AG04449 (cell line): ENCODE measurements at regions of chr17 and their contacts with region 1.

Region 1: DNA sequence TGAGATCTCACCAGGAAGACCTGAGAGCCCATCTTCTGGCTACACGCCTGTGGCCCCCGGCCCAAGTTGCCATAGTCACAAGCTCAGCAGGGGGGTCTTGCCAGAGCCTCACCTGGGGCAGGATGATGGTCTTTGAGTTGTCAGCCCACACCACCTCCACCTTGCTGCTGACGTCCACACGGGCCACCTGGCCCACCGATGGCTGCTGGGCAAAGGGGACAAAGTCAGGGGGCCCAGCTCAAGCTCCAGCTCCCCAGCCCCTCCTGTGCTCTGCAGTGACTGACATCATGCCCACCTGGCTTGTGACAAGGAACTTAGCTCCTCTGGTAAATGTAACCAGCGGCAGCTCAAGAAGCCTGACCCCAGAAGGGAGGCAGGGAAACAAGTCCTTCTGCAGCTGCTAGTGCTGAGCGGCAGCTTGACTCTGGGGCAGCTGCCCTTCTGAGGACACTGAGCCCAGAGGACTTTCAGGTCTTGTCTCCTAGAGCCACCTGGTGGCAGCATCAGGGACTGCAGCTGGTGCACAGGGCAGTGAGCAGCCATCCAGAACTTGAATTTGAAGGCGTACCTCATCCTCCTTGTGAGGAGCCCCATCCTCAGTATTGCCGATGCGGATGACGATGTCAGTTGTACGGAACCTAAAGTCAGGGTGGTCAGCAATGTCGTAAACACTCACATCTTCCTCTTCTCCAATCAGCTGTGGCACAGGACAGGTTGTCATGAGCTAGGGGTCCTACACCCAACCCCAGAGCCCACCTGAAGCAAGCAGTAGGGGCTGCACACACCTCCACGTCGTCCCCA is 13.5 kb downstream of the SPHK1 start:
- DNase-seq: no peak
- H3K4me3 ChIP-seq: no peak overlapping the region
- CTCF ChIP-seq: peak; percentile 93

Region 2: GRCh38 chr17:76278952-76279741 is 118.7 kb before region 1 on chr17:
- CTCF ChIA-PET with region 1: interaction called, 19 read pairs
- POLR2A ChIA-PET with region 1: no interaction called
- DNase-seq: peak; percentile 14
- H3K4me3 ChIP-seq: no peak overlapping the region
- CTCF ChIP-seq: peak; percentile 94

Region 3: GRCh38 chr17:76314392-76315227 is 83.3 kb before region 1 on chr17:
- CTCF ChIA-PET with region 1: interaction called, 851 read pairs
- POLR2A ChIA-PET with region 1: no interaction called
- DNase-seq: no peak
- H3K4me3 ChIP-seq: no peak overlapping the region
- CTCF ChIP-seq: no peak

Region 4: GRCh38 chr17:76337413-76337777 is 60.5 kb before region 1 on chr17:
- CTCF ChIA-PET with region 1: interaction called, 25 read pairs
- POLR2A ChIA-PET with region 1: interaction called, 3 read pairs
- DNase-seq: no peak
- H3K4me3 ChIP-seq: no peak overlapping the region
- CTCF ChIP-seq: no peak

Region 5: DNA sequence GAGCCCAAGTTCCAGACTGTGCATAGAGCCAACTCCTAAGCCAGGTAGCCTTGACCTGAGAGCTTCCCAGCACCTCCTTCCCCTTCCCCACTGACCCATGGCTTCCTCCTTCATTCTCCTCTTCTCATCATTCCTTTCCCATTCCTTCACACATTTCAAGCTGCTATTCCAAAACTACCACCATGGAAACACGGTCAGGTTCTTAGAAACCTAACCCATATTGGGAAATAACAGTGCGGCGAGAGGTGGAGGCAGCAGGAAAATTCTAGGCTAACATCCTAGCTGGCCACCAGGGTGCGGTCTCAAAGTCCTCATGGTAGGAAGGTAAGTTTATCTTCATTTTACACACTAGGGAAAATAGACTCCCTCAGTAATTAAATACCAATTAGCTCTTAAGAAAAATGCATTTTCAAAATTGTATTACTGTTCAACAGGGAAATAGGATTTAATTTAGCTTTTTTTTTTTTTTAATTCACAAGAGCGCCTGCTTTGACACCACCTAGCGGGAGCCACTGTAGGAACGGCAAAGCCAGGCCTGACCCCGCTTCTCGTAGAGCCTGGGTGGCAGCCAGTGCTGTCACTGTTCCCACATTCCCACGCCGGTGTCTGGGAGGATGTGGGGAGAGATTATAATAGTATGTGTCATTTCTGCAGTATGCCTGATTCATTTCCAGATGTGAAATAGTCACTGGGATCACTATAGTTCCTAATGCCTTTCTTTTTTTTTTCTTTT is 27.5 kb before region 1 on chr17:
- CTCF ChIA-PET with region 1: interaction called, 16 read pairs
- POLR2A ChIA-PET with region 1: no interaction called
- DNase-seq: peak; percentile 67
- H3K4me3 ChIP-seq: no peak overlapping the region
- CTCF ChIP-seq: peak; percentile 68

Region 6: GRCh38 chr17:76452660-76453430 is 55.0 kb after region 1 on chr17 and contains the start of gene UBE2O:
- CTCF ChIA-PET with region 1: interaction called, 36 read pairs
- POLR2A ChIA-PET with region 1: no interaction called
- DNase-seq: no peak
- H3K4me3 ChIP-seq: peak within 1 kb of the TSS; percentile 77
- CTCF ChIP-seq: peak; percentile 80

Region 7: DNA sequence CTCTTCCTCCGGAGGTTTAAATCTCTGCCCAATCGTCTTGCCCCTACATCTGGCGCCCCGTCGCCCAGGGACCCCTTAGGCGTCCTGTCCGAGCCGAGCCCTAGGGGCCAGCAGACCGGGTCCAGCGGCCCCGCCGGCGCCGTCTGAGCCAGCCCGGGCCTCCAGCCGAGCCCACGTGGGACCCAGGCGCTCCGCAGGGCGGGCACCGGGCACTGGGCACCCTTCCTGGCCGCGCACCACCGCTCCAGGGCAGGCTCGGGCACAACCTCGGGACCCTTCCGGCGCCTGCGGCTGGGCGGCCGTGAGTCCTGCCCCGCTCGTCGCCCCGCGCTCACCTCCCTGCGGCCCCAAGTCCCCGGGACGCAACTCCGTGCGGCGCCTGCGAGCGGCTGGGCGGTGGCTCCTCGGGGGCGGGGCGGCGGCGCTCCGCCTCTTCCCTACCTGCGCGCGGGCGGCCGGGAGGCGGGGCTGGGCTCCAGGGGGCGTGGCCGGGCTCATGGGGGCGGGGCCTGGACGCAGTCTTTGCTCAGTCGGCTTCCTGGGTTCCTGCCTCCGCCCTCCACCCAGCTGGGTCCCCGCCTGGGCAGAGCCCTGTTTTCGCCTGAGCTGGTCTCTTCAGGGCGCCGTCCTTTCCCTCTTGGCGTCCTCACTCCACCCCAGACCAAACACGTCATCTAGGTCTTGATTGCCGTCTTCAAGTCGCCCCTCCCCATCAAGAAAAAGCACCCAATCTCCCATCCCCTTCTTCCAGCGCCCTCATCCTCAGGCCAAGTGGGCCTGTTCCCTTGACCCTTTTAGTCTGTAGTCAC is 103.3 kb after region 1 on chr17 and contains the start of gene RHBDF2:
- CTCF ChIA-PET with region 1: interaction called, 15 read pairs
- POLR2A ChIA-PET with region 1: no interaction called
- DNase-seq: no peak
- H3K4me3 ChIP-seq: peak within 1 kb of the TSS; percentile 66
- CTCF ChIP-seq: no peak